ENCODE measurements at regions of chr20 and their contacts with region 1.

Region 1: DNA sequence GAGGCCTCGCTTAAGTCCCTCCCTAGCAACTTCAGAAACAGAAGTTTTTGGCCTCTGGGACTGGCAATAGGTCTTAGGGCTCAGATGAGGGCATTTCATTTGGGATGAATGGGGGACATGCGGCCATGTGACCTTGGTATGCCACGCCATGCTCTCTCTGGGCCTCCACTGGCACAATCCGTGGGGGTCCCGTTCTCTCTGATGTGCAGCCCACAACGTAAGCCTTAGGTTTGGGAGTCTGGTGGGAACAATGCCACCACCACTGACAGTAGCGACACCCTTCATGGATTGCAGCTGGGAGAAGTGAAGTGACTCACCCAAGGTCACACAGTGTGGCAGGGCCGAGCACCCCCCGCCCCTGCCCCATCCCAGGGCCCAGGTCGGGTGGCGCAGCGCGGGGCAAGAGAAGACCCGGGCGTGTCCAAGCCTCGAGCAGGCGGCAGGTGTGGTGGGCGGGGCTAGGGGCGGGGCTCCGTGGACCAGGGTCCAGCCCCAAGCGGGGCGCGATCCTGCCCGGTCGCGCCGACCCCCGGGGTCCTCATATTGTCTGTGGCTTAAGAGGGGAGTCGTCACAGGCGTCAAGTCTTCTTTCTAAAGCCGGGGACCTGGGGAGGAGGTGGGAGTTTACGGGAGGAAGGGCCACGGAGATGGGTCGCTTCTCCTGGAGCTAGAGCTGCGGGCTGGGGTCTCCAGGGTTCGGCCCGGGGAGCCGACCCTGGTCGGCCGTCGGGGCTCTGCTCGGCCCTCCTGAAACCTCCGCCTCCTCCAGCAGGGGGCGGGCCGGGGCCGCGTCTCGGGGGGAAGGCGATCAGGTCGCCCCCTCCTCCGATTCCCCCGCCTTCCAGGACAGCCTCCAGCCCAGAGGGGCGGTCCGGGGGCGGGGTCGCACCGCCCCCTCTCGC is 698 bp upstream of the CEBPB start:
- DNase-seq: peak; percentile 75 to 92 (median 82)
- ATAC-seq: peak; percentile 48 to 55
- H3K4me3 Mint-ChIP-seq: peak overlapping the region; percentile 41 to 81 (median 67)
- H3K27ac Mint-ChIP-seq: peak overlapping the region in 6 of 10 donors; percentile 27 to 75 (median 56)
- H3K4me1 Mint-ChIP-seq: peaks cover 20 to 34% (median 29%) of the 10 kb centered on the region in 4 donors
- H3K27me3 Mint-ChIP-seq: peaks cover 2 to 13% (median 8%) of the 10 kb centered on the region in 5 donors

Region 2: DNA sequence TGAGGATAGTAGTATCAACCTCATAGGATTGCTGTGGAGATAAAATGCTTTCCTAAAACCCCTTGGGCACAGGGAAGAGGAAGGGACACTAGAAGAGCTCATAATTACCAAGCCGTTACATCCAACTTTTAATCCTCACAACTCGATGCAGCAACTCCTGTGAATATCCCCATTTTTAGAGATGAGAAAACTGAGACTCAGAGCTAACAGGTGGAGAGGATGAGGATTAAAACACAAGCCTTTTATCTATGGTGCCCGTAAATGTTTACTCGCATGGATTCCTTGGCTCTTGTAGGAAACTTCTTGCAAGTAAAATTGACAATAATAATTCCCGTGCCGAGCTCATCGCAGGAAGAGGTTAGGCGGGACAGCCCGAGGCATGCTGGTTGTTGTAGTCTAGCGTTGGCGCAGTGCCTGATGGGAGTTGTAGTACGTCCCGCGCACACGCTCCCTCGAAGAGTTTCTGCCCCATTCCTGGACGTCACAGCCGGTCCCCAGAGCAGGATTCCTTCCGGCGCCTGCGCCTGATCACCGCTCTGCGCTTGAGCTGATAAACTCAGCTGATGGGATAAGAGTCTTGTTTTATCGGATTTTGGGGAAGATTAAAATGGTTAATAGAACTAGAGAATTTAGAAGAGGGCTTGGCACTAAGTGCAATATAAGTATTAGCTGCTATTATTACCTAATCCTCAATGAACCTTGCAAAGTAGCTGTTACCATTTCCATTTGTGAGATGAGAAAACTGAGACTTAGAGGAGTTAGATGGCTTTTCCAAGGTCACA is 74.2 kb before region 1 on chr20:
- POLR2A ChIA-PET with region 1: interaction called, 13 read pairs
- DNase-seq: peak; percentile 82 to 94 (median 88)
- ATAC-seq: peak; percentile 76 to 79
- H3K4me3 Mint-ChIP-seq: peak overlapping the region; percentile 84 to 98 (median 92)
- H3K27ac Mint-ChIP-seq: peak overlapping the region; percentile 85 to 97 (median 94)
- H3K4me1 Mint-ChIP-seq: peaks cover 34 to 56% (median 54%) of the 10 kb centered on the region in 4 donors
- H3K27me3 Mint-ChIP-seq: no peaks in the 10 kb centered on the region

Region 3: GRCh38 chr20:50200482-50201104 is 10.7 kb after region 1 on chr20:
- POLR2A ChIA-PET with region 1: interaction called, 10 read pairs
- DNase-seq: peak in 1 of 10 donors; percentile 10
- ATAC-seq: no peak
- H3K4me3 Mint-ChIP-seq: no peak overlapping the region
- H3K27ac Mint-ChIP-seq: peak overlapping the region in 1 of 10 donors; percentile 44
- H3K4me1 Mint-ChIP-seq: peaks cover 0 to 11% (median 6%) of the 10 kb centered on the region in 4 donors
- H3K27me3 Mint-ChIP-seq: no peaks in the 10 kb centered on the region

Region 4: DNA sequence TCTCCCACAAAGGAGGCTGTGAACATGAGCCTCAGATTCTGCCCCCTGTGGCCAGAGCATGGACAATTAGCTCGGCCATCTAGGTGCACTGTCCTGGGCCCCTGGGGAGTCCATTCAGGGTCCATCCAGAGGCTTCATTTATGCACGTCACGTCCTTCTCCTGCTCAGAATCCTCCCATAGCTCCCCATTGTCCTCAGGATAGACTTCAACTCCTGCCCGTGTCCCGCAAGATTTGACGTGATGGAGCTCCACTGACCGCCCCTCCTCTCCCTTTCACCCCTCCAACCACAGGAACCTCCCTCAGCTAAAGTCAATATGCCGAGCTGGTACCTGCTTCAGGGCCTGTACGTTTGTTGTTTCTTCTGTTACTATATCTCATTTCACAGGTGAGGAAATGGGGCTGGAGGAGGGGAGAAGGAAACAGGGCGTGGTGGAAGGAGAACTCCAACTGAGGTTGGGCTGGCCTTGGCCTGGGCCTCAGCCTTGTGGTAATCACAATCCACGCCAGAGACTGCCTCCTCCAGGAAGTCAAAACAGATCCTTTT is 39.2 kb after region 1 on chr20:
- POLR2A ChIA-PET with region 1: no interaction called
- DNase-seq: no peak
- ATAC-seq: no peak
- H3K4me3 Mint-ChIP-seq: no peak overlapping the region
- H3K27ac Mint-ChIP-seq: no peak overlapping the region
- H3K4me1 Mint-ChIP-seq: no peaks in the 10 kb centered on the region
- H3K27me3 Mint-ChIP-seq: peaks cover 0 to 9% (median 2%) of the 10 kb centered on the region in 5 donors